Posterior cingulate gyrus (tissue), 11 donors: ENCODE measurements at regions of chr4 and their contacts with region 1.

Region 1: GRCh38 chr4:162497564-162498167 is 333.9 kb upstream of the FSTL5 start:
- DNase-seq: no peak

Region 2: GRCh38 chr4:163042306-163042705 is 544.6 kb after region 1 on chr4:
- intact Hi-C with region 1: loop called (anchors 2 kb)
- DNase-seq: no peak

Region 3: DNA sequence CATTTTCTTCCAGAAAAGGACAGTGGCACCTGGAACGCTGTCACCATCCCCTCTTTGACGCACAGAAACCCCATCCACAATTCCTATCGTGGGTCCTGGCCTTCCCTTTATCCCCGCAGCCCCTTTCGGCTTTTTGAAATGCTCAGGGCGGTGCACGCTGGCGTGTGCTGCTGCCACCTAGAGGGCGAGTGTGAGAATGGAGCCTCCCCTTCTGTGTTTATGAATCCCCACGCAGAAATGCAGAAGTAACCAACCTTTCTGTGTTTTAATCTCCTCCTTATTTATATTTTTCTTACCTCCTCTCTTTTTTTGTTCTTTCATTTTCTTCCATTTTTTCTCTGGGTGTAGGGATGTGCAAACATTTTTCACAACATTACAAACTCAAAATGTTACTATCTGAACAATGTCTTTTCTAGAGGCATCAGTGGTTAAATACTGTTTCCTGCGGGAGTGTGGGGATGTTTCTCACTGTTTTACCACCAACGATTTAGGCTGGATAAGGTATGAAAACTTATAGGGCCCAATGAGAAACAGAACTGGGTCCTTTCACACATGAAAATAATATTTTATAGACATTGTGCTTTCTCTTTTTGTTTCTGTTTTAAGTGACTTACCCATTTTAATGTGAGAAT is 1046.9 kb after region 1 on chr4:
- intact Hi-C with region 1: loop called (anchors 5 kb)
- DNase-seq: peak; percentile 14 to 93 (median 60)